ENCODE measurements at regions of chr13 and their contacts with region 1.

Region 1: DNA sequence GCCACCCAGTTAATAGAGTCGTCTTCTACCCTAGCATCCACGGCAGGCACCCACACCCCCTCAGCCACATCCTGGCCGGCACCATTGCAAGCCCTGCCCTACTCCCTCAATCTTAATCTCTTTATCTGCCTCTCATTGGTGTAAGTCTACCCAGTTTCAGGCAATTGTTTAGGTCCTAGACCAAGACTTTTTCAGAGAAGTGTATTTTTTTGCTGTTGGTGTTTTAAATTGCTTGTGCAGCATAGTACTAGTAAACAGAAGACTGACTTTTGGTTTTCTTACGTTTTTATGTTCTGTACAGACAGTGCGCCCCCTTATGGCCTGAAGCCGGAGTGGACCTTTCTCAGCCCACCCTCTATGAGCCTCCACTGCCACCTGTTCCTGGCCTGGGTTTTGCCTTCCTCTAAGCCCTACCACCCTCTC is 2.3 kb upstream of the LCP1 start:
- DNase-seq: peak; percentile 87
- H3K4me3 ChIP-seq: peak overlapping the region; percentile 92
- H3K27ac ChIP-seq: peak overlapping the region; percentile 92
- H3K4me1 ChIP-seq: peaks cover 32% of the 10 kb centered on the region
- CTCF ChIP-seq: peak; percentile 99

Region 2: DNA sequence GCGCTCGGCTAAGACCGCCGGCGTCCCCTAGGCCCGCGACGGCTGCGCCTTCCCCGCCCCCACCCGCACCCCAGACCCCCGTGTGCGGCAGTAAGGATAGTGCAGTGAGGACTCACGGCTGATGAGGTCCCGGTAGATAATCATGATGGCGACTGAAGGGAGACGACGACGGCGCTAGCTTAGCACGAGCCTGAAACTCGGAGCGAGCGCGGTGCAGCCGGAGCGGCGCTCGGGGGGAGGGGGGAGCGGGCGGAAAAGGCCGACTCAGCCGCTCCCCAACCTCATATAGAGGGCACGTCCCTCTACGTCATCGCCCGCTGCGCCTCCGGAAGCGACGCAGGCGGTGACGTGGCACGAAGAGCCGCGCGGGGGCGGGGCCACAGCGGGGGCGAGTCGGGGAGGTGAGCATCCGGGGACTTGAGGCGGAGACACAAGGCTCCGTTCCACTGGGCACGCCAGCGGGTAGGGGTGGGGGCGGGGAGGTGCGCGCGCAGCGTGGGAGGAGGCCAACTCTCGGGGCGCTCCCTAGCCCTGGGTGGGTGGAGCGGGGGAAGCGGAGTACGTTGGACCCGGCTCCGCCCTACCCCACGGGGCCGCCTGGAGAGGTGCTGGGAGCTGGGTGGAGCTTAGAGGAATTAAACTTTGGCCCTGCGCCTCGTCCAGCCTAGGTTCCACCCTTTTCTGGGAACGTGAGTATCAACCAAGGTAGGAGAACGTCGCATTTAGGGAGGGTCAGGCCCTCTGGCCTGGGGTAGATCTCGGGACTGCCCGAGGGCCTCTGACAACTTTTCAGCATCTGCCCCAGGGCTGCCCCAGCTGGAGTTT is 843.1 kb before region 1 on chr13 and contains the start of gene TPT1:
- CTCF ChIA-PET with region 1: no interaction called
- POLR2A ChIA-PET with region 1: no interaction called
- intact Hi-C with region 1: loop called (anchors 5 kb)
- DNase-seq: peak; percentile 98
- H3K4me3 ChIP-seq: peak within 1 kb of the TSS; percentile 82
- H3K27ac ChIP-seq: peak within 1 kb of the TSS; percentile 78
- H3K4me1 ChIP-seq: peaks cover 40% of the 10 kb centered on the region
- CTCF ChIP-seq: no peak
- total RNA-seq, gene TPT1: 1,996 and 2,481 TPM in 2 replicates

Region 3: DNA sequence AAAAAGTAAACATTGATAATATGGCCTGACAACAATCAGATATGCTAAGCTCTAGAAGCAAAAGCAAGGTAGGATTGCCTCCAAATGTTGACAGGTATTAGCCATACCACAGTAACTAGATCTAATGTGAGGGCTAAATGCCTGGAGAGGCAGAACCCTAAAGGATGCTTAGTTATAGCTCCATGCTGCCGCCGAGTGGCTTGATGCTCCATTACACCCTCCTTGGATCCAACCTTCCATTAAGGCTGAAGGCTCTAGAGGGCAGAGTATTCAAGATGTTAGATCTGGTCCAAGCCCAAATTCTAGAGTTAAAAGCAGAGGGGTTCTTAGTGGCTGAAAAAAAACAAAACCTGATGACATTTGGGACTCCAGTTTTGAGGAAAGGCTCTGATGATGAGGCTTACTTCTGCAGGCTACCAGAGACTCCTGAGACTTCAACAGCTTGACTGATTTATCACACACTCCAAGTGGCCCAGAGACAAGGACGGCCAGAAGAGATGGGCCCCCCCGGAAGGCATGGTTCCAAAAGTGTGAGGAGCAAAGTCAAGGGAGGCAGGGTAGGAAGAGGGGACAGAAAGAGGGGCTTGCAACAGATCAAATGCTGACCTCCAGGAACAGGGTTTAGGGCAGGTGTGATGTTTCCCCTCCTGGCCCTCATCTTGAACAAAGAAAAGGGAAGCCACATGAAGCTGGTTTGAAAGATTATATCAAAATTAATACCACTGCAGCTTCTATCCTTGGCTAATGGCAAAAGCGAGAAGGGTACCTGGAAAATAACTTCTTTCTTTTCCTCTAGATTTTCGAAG is 57.5 kb before region 1 on chr13:
- CTCF ChIA-PET with region 1: no interaction called
- POLR2A ChIA-PET with region 1: no interaction called
- intact Hi-C with region 1: loop called (anchors 2 kb)
- DNase-seq: peak; percentile 77
- H3K4me3 ChIP-seq: no peak overlapping the region
- H3K27ac ChIP-seq: no peak overlapping the region
- H3K4me1 ChIP-seq: peaks cover 15% of the 10 kb centered on the region
- CTCF ChIP-seq: peak; percentile 90

Region 4: DNA sequence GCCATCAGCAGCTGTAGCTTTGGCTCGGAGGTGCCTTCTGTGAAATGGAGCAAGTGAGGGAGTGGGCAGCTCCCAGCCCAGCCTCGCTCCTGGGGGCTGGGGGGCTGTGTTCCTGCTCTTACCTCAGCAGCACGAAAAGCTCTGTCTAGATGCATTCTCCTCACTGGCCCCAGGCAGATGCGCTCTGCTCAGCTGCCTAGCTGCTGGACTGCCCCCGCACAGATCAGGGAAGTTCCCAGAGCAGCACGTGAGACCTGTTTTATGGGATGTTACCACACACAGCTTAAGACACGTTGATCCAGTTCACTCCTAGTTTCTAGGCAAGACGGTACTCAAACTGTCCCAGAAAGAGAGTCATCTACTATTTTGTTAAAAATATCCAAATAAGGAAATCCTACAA is 15.9 kb before region 1 on chr13:
- CTCF ChIA-PET with region 1: interaction called, 3 read pairs
- POLR2A ChIA-PET with region 1: interaction called, 37 read pairs
- intact Hi-C with region 1: loop called (anchors 2 kb)
- DNase-seq: no peak
- H3K4me3 ChIP-seq: peak overlapping the region; percentile 38
- H3K27ac ChIP-seq: peak overlapping the region; percentile 23
- H3K4me1 ChIP-seq: peaks cover 90% of the 10 kb centered on the region
- CTCF ChIP-seq: no peak

Region 5: DNA sequence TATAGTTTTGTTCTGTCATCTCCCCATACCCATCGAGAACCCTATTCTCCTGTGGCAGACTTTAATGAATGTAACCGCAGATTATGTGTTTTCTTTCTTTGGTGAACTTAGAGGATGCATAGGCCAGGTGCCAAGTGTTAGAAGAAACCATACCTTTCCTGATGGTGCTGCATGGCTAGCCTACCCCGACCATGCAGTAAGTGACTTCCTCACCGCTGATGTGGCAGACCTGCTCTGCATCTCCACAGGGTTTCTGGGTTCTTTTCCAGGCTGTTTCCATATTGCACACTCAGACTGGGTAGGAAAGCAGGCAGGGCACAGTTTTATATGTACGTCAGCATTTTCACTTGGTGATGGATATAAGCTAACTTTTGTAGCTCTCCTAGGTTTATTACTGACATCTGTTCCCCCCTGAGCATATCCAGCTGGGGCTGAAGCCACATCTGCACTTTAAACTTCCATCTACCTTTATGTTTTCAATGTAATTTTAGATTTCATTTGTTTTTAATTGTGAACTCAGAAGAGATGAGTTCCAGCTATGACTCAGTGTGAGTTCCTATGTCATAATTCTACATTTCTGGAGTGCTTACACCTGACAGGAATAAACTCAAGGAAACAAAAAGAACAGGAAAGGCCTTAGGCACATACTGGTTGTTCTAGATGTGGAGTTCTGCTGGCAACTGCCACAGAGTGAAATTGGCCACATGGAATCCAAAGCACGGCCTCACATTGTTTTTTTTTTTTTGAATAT is 411.0 kb after region 1 on chr13:
- CTCF ChIA-PET with region 1: no interaction called
- POLR2A ChIA-PET with region 1: no interaction called
- intact Hi-C with region 1: loop called (anchors 5 kb)
- DNase-seq: peak; percentile 94
- H3K4me3 ChIP-seq: peak overlapping the region; percentile 58
- H3K27ac ChIP-seq: peak overlapping the region; percentile 98
- H3K4me1 ChIP-seq: peaks cover 99% of the 10 kb centered on the region
- CTCF ChIP-seq: no peak; the same call in 1 of the 2 replicates